ENCODE measurements at regions of chr22 and their contacts with region 1.

Region 1: DNA sequence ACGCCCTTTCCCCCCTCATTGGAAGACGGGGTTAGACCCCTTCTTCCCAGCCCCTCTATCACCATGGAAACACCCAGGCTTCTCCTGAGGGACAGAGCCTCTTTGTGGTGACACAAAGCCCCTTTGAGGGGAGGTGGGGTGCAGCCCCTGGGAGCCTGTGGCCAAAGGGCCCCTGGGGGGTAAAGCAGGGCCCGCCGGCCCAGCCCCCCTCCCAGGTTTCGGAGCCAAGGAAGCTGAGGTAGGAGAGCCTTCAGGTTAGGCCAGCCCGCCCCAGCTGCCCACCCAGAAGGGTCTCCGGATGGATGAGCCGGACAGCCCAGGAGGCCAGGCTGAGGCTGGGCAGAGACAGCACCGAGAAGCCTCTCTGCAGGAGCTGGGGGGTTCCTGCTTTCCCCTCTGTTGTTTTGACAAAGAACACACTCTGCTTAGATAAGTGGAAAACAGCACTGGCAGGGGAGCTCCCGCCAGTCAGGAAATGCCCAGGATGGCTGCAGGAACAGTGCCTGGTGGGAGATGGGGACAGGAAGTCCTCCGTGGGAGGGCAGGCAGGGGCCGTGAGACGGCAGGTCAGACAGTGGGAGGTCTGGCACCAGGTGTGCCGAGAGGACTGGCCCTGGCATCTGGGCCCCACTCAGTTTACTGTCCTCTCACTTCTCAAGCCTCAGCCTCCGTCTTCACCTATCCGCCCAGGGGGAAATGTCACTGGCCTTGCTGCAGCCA is 18.2 kb downstream of the ARVCF start:
- DNase-seq: no peak
- H3K4me3 ChIP-seq: no peak overlapping the region
- H3K27ac ChIP-seq: no peak overlapping the region
- H3K4me1 ChIP-seq: peaks cover 6% of the 10 kb centered on the region
- H3K27me3 ChIP-seq: no peaks in the 10 kb centered on the region
- CTCF ChIP-seq: no peak

Region 2: DNA sequence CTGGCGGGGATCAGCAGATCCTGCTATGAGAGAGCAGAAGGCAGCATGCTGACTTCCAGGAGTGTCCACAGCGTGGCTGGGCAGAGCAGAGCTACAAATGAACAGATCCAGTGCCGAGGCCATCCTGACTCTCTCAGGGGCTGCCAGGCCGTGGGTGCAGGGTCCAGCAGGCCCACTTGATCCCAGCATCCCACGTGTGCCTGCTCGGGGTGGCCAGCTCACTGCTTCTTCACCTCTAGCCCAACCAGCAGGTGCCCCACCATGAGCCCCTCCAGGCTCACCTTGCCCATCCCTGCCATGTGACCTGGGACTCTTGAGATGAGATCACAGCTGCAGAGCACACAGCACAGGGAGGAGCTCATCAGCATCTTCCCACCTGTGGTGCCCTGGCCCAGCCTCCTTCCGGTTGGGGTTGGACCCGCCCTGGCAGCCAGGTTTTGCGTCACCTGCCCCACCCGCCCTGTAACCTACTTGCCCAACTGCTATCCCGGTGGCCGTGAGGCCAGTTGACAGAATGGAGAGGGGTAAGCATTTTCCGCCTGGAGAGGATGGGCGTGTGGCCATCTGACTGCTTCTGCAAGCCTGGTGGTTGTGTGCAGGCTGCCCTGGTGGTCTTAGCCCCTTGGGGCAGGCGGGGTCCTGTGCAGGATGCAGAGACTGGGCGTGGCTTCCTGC is 33.5 kb after region 1 on chr22:
- CTCF ChIA-PET with region 1: no interaction called
- POLR2A ChIA-PET with region 1: no interaction called
- intact Hi-C with region 1: loop called (anchors 1 kb)
- DNase-seq: no peak
- H3K4me3 ChIP-seq: no peak overlapping the region
- H3K27ac ChIP-seq: no peak overlapping the region
- H3K4me1 ChIP-seq: no peaks in the 10 kb centered on the region
- H3K27me3 ChIP-seq: no peaks in the 10 kb centered on the region
- CTCF ChIP-seq: no peak

Measured in A673 (cell line).